ENCODE measurements at regions of chr20 and their contacts with region 1.

Region 1: DNA sequence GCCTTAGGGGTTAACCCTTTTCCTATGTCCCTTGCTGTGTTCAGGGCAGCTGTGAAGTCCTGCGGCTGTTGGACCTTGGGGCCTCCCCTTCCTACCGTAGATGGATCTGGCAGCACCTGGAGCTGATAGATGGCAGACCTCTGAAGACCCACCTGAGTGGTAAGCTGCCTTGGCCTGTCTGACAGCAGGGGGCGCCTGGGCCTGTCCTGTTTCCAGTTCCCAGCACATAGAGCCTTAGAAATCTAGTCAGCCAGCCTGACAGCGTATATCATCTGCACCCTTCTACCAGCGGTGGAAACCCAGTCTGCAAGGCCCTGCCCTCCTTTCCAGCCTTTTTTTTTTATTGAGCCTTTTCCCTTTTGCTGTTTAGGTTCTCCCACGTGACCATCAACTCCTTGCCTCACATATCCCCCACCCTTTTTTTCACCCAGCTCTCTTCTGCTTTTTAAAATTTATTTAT is 26.6 kb downstream of the CNBD2 start:
- DNase-seq: peak; percentile 90
- ATAC-seq: peak; percentile 93
- H3K4me3 ChIP-seq: no peak overlapping the region
- H3K27ac ChIP-seq: no peak overlapping the region
- H3K4me1 ChIP-seq: no peaks in the 10 kb centered on the region
- H3K27me3 ChIP-seq: no peaks in the 10 kb centered on the region
- CTCF ChIP-seq: peak; percentile 94

Region 2: DNA sequence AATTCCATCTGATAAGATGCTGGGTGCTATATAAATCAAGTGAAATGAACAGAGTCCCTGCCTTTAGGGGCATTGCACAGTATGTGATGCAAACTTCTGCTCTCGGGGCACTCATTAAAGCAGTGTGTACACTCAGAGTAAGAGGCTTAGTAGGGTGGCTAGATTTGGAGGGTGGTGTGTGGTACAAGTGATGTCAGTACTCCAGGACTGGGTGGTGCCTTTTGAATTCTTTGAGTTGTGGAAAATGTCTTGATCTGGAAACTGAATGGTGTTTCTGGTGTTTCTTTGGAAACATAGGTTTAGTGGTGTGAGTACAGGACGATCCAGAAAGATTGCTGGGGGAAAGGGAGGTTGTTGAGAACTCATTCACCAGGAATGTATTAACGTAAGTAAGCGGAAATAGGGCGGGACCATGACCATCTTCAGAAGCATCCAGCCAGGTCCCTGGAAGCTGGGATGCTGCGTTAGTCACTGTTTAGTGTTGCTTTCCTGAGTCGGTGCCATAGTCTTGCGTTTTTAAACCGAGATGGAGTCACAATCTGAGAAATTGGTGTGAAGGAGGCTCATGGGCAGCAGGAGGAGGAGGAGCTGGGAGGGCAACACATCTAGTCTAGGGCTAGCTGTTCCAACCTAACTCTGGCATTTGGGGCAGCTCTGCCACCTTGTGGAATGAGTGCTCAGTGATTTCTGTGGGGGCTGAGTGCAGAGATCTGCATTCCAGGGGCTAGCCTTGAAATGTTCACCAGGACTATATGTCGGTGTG is 111.1 kb before region 1 on chr20:
- CTCF ChIA-PET with region 1: no interaction called
- POLR2A ChIA-PET with region 1: no interaction called
- intact Hi-C with region 1: no loop called
- DNase-seq: peak; percentile 99
- ATAC-seq: peak; percentile 86
- H3K4me3 ChIP-seq: peak overlapping the region; percentile 39; the same call in 1 of the 2 replicates
- H3K27ac ChIP-seq: peak overlapping the region; percentile 97
- H3K4me1 ChIP-seq: peaks cover 41% of the 10 kb centered on the region
- H3K27me3 ChIP-seq: no peaks in the 10 kb centered on the region
- CTCF ChIP-seq: peak; percentile 92

Region 3: GRCh38 chr20:35954200-35954906 is 40.7 kb before region 1 on chr20 and contains the start of gene SCAND1:
- CTCF ChIA-PET with region 1: interaction called, 36 read pairs
- POLR2A ChIA-PET with region 1: interaction called, 5 read pairs
- intact Hi-C with region 1: loop called (anchors 2 kb)
- DNase-seq: peak; percentile 99
- ATAC-seq: peak; percentile 88
- H3K4me3 ChIP-seq: peak within 1 kb of the TSS; percentile 95
- H3K27ac ChIP-seq: peak within 1 kb of the TSS; percentile 93
- H3K4me1 ChIP-seq: peaks cover 13% of the 10 kb centered on the region
- H3K27me3 ChIP-seq: no peaks in the 10 kb centered on the region
- CTCF ChIP-seq: peak; percentile 94
- total RNA-seq, gene SCAND1: 90.9 and 101 TPM in 2 replicates

Region 4: DNA sequence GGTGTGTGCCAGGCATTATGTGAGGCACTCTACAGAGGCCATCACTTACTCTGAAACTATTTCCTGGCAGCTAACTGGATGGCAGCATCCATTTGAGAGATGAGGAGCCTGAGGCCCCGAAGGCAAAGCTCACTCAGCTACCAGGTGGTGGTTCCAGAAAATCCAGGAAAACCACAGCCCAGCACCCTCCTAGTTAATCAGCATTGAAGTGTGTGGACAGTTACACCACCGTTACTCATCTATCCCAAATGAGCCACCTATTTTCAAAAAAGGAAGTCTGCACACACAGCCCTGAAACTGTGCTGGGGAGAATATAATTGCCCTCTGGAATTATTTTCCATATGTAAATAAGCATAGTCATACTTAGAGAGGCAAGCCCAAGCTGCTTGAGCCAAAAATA is 40.7 kb after region 1 on chr20:
- CTCF ChIA-PET with region 1: interaction called, 9 read pairs
- POLR2A ChIA-PET with region 1: no interaction called
- intact Hi-C with region 1: loop called (anchors 5 kb)
- DNase-seq: peak; percentile 92
- ATAC-seq: peak; percentile 95
- H3K4me3 ChIP-seq: no peak overlapping the region
- H3K27ac ChIP-seq: peak overlapping the region; percentile 10; the same call in 1 of the 2 replicates
- H3K4me1 ChIP-seq: peaks cover 21% of the 10 kb centered on the region
- H3K27me3 ChIP-seq: no peaks in the 10 kb centered on the region
- CTCF ChIP-seq: no peak

Region 5: GRCh38 chr20:36132802-36133211 is 137.8 kb after region 1 on chr20:
- CTCF ChIA-PET with region 1: interaction called, 78 read pairs
- POLR2A ChIA-PET with region 1: no interaction called
- intact Hi-C with region 1: loop called (anchors 1 kb)
- DNase-seq: no peak
- ATAC-seq: no peak
- H3K4me3 ChIP-seq: no peak overlapping the region
- H3K27ac ChIP-seq: no peak overlapping the region
- H3K4me1 ChIP-seq: peaks cover 11% of the 10 kb centered on the region
- H3K27me3 ChIP-seq: no peaks in the 10 kb centered on the region
- CTCF ChIP-seq: no peak

Region 6: DNA sequence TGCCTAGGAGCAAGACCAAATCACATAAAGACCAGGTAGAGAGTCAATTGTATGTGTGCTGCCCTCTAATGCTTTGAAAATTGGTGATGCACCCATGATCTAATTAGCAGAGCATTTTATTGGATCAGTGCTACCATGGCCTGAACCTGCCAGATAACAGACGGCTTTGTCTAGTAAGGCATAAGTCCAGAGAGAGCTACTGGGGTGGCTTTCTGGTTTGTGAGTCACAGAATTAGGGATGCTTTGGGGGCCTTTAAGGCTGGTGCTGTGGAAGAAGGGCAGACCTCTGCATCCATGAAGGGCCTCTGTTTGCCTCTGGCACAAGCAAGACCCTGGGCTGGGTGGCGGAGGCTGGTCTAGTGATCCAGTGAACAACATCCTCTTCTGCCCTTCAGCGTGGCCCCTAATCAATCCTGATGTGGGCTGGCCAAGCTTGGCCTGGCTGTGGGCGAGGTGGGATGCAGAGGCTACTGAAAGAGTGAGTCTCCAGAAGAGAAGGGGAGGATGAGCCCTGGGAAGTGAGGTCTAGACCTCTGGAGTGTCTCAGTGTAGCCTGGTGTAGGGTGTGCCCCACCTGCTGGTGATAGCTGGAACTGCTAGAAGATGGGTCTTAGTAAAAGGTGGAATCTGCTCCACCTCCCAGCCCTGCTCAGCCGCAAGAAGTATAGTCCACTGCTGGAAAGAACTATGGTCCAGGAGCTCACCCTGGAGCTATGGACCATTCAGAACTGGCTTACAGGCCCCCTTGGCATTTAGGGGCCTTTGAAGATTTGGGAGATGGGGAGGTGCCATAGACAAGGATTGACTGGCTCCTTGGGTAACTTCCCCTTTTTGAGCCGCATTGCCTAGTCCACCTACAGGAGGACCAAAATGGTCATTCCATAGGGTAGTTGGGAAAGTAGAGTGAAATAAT is 204.6 kb after region 1 on chr20:
- CTCF ChIA-PET with region 1: interaction called, 13 read pairs
- POLR2A ChIA-PET with region 1: no interaction called
- intact Hi-C with region 1: loop called (anchors 1 kb)
- DNase-seq: peak; percentile 88
- ATAC-seq: peak; percentile 90
- H3K4me3 ChIP-seq: no peak overlapping the region
- H3K27ac ChIP-seq: no peak overlapping the region
- H3K4me1 ChIP-seq: no peaks in the 10 kb centered on the region
- H3K27me3 ChIP-seq: no peaks in the 10 kb centered on the region
- CTCF ChIP-seq: peak; percentile 90

Measured in PC-3 (cell line).